ENCODE measurements at regions of chr14 and their contacts with region 1.

Region 1: GRCh38 chr14:39015360-39015961 is 87.6 kb downstream of the SEC23A start:
- DNase-seq: peak in 1 of 2 experiments; percentile 36
- H3K4me3 ChIP-seq: no peak overlapping the region
- H3K27ac ChIP-seq: no peak overlapping the region
- H3K4me1 ChIP-seq: no peaks in the 10 kb centered on the region
- H3K27me3 ChIP-seq: no peaks in the 10 kb centered on the region
- CTCF ChIP-seq: peak; percentile 76

Region 2: DNA sequence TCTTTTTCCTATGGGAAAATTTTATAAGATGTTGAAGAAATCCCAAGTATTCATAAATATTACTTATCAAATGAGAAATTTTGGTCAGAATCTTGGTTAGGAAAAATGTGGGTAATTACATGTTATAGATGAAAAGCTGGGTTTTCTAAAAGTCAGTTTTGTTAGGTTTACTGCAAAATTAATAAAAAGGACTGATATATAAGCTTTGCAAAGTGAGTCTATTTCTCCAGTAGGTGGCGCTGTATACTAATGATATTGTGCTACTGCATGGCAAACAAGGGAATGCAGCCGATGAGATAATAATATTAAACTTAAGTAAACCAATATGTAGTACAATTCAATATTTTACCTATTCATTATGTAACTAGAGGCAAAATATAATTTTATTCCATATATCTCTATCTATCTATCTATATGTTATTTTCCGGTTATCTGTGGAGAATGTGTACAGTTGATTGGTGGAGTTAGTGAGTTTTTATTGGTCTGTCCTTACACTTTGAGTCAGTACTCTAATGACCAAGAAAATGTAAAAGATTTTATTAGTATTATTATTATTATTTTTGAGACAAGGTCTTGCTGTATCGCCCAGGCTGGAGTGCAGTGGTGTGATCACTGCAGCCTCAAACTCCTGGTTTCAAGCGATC is 1784.8 kb before region 1 on chr14:
- CTCF ChIA-PET with region 1: no interaction called
- POLR2A ChIA-PET with region 1: no interaction called
- intact Hi-C with region 1: loop called (anchors 10 kb)
- DNase-seq: peak in 1 of 2 experiments; percentile 57
- H3K4me3 ChIP-seq: no peak overlapping the region
- H3K27ac ChIP-seq: no peak overlapping the region
- H3K4me1 ChIP-seq: no peaks in the 10 kb centered on the region
- H3K27me3 ChIP-seq: no peaks in the 10 kb centered on the region
- CTCF ChIP-seq: peak; percentile 80

Region 3: DNA sequence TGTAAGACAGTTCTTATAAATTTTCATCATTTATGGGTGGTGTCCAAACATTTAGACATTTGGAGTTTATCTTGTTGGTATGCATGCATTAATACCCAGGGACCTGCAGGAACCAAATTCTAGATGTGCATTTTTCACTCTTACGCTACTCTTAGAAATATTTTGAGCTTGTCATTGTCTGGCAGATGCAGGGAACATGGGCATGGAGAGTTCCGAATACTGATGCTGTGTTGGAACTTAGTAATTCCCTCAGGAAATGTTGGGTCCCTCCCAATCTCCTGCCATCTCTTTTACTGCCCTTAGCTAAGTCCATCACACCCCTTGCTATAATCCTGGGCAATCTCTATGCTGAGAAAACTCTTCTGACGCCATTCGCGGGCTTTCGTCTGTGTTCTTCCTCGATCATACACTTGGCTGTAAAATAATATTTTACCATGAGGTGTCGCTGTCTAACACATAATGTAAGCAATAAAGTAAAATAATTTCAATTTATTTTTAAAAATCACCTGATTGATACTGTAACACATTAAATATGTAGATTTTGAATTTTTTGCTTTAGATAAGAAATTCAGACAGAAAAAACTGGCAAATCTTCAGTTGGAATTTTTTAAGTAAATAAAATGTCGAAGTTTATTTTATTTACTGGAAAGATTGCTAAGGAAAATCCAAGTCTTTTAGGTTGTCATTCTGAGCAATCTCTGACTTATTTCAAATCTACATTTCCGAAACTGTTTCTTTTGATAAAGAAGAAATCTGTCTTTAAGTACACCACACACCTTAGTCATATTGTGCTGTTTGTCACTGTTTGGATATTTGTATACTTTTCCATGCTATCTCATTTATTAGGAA is 1111.9 kb before region 1 on chr14:
- CTCF ChIA-PET with region 1: no interaction called
- POLR2A ChIA-PET with region 1: no interaction called
- intact Hi-C with region 1: loop called (anchors 5 kb)
- DNase-seq: peak in 1 of 2 experiments; percentile 1
- H3K4me3 ChIP-seq: no peak overlapping the region
- H3K27ac ChIP-seq: no peak overlapping the region
- H3K4me1 ChIP-seq: no peaks in the 10 kb centered on the region
- H3K27me3 ChIP-seq: no peaks in the 10 kb centered on the region
- CTCF ChIP-seq: peak; percentile 84

Region 4: GRCh38 chr14:38405851-38406635 is 609.4 kb before region 1 on chr14:
- CTCF ChIA-PET with region 1: no interaction called
- POLR2A ChIA-PET with region 1: no interaction called
- intact Hi-C with region 1: no loop called
- DNase-seq: no peak
- H3K4me3 ChIP-seq: no peak overlapping the region
- H3K27ac ChIP-seq: no peak overlapping the region
- H3K4me1 ChIP-seq: 0 out of 2 replicates have a peak, but pooled peaks cover 5% of the 10 kb centered on the region
- H3K27me3 ChIP-seq: no peaks in the 10 kb centered on the region
- CTCF ChIP-seq: no peak

Region 5: GRCh38 chr14:38721822-38722431 is 293.5 kb before region 1 on chr14:
- CTCF ChIA-PET with region 1: no interaction called
- POLR2A ChIA-PET with region 1: no interaction called
- intact Hi-C with region 1: loop called (anchors 2 kb)
- DNase-seq: peak in 1 of 2 experiments; percentile 29
- H3K4me3 ChIP-seq: no peak overlapping the region
- H3K27ac ChIP-seq: no peak overlapping the region
- H3K4me1 ChIP-seq: no peaks in the 10 kb centered on the region
- H3K27me3 ChIP-seq: no peaks in the 10 kb centered on the region
- CTCF ChIP-seq: peak; percentile 75

Region 6: GRCh38 chr14:38867561-38868150 is 147.8 kb before region 1 on chr14:
- CTCF ChIA-PET with region 1: no interaction called
- POLR2A ChIA-PET with region 1: no interaction called
- intact Hi-C with region 1: loop called (anchors 1 kb)
- DNase-seq: peak in 1 of 2 experiments; percentile 45
- H3K4me3 ChIP-seq: no peak overlapping the region
- H3K27ac ChIP-seq: no peak overlapping the region
- H3K4me1 ChIP-seq: peaks cover 7% of the 10 kb centered on the region; the same call in 1 of the 2 replicates
- H3K27me3 ChIP-seq: no peaks in the 10 kb centered on the region
- CTCF ChIP-seq: peak; percentile 80

Region 7: GRCh38 chr14:39071096-39071495 is 55.6 kb after region 1 on chr14:
- CTCF ChIA-PET with region 1: no interaction called
- POLR2A ChIA-PET with region 1: no interaction called
- intact Hi-C with region 1: no loop called
- DNase-seq: no peak
- H3K4me3 ChIP-seq: no peak overlapping the region
- H3K27ac ChIP-seq: no peak overlapping the region
- H3K4me1 ChIP-seq: no peaks in the 10 kb centered on the region
- H3K27me3 ChIP-seq: no peaks in the 10 kb centered on the region
- CTCF ChIP-seq: no peak